ENCODE measurements at regions of chr17 and their contacts with region 1.

Region 1: GRCh38 chr17:75295201-75296158 is 6.2 kb upstream of the SLC25A19 start:
- DNase-seq: peak; percentile 74
- H3K4me3 Mint-ChIP-seq: peak overlapping the region; percentile 42
- H3K27ac Mint-ChIP-seq: peak overlapping the region; percentile 89
- H3K4me1 Mint-ChIP-seq: peaks cover 41% of the 10 kb centered on the region
- H3K27me3 Mint-ChIP-seq: no peaks in the 10 kb centered on the region

Region 2: DNA sequence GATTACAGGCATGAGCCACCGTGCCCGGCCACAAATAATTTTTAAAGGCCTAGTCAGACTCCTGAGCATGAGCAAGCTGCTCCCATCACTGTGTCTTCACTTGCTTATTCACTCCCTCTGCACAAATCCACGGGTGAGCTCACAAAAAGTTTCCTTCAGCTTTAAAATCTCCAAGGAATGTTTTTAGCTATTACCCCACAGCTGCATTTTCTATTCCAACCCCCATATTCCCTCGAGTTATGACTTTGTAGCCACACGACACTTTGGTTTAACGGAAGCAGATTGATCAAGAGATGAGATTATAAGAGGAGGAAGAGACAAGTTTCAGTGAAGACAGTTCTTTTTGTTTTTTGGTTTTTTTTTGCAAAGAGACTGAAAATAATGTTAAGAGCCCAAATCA is 42.9 kb after region 1 on chr17:
- CTCF ChIA-PET with region 1: interaction called, 4 read pairs
- intact Hi-C with region 1: loop called (anchors 2 kb)
- DNase-seq: no peak
- H3K4me3 Mint-ChIP-seq: peak overlapping the region; percentile 56
- H3K27ac Mint-ChIP-seq: peak overlapping the region; percentile 90
- H3K4me1 Mint-ChIP-seq: peaks cover 78% of the 10 kb centered on the region
- H3K27me3 Mint-ChIP-seq: no peaks in the 10 kb centered on the region

Region 3: DNA sequence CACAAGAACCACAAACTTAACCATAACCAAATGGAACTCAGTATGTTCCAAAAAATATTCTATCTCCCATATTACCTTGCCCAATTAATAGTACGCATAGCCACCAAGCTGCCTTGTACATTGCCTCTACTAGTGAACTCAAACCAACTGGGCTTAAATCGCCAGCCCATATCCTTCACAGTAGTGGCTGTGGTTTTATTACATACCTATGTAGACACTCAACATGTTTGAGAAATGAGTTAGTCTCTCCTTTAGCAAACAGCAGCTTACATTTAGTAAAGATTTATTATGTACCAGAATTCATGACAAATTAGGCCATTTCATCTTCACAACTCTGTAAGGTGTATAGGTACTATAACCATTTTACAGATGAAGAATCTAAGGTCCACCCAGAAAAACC is 68.6 kb after region 1 on chr17:
- CTCF ChIA-PET with region 1: interaction called, 3 read pairs
- intact Hi-C with region 1: loop called (anchors 1 kb)
- DNase-seq: no peak
- H3K4me3 Mint-ChIP-seq: no peak overlapping the region
- H3K27ac Mint-ChIP-seq: peak overlapping the region; percentile 82
- H3K4me1 Mint-ChIP-seq: peaks cover 93% of the 10 kb centered on the region
- H3K27me3 Mint-ChIP-seq: no peaks in the 10 kb centered on the region

Region 4: GRCh38 chr17:75412455-75413317 is 117.2 kb after region 1 on chr17:
- CTCF ChIA-PET with region 1: interaction called, 17 read pairs
- intact Hi-C with region 1: no loop called
- DNase-seq: peak; percentile 87
- H3K4me3 Mint-ChIP-seq: peak overlapping the region; percentile 37
- H3K27ac Mint-ChIP-seq: no peak overlapping the region
- H3K4me1 Mint-ChIP-seq: peaks cover 18% of the 10 kb centered on the region
- H3K27me3 Mint-ChIP-seq: no peaks in the 10 kb centered on the region